ENCODE measurements at regions of chr1 and their contacts with region 1.

Region 1: DNA sequence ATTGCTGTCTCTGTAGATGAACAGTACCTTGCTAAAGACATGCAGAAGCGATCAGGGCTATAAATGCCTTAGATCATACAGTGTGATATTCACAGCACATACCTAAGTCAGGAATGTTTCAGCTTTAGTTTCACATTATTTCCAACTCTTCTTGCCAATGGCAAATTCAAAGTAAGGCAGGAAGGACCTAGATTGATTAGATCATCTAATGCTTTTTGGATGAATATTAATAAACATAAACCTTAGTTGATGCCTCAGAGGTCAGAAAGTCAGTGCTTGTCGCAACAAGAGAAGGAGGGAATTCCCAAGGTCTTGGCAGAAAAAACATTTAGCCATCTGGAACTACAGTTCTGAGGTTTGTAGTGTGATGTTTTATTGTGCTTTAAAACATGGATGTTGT is 122.3 kb downstream of the TNFSF18 start:
- DNase-seq: peak; percentile 82
- H3K4me3 ChIP-seq: no peak overlapping the region
- H3K27ac ChIP-seq: peak overlapping the region; percentile 82
- H3K27me3 ChIP-seq: no peaks in the 10 kb centered on the region
- CTCF ChIP-seq: no peak

Region 2: DNA sequence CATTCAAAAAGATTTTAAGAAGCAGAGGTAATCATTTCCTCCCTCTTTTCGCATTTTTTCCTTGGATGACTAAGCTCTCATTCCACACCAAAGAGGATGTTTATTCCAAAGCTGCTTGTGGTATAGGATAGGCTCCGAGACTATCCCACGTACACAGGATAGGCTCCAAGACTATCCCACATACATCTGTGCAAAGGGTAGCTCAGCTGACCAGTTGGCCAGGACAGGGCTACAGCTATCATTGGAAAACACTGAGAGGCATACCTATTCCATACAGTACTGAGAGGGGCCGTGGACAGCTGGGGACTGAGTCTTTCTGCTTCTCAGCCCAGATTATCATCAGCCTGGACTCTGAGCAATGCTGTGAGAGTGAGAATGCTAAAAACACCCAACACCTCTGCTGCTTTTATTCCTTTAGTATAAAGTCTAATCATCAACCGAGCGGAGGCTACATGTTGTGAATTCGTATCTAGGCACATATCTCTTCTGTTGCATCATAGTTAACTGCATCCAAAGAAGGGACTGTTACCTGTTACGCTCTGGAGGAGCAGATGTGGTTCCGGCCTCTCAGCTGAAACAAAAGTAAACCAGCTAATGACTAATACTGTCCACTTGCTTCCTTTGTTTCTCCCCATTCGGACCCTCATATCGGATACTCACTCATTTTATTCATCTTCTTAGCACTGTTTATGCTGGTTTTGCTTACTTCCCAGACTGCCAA is 18.6 kb before region 1 on chr1:
- CTCF ChIA-PET with region 1: no interaction called
- POLR2A ChIA-PET with region 1: interaction called, 13 read pairs
- DNase-seq: peak; percentile 99
- H3K4me3 ChIP-seq: peak overlapping the region; percentile 35
- H3K27ac ChIP-seq: peak overlapping the region; percentile 97
- H3K27me3 ChIP-seq: no peaks in the 10 kb centered on the region
- CTCF ChIP-seq: no peak

Measured in AG04450 (cell line).